MCF 10A (cell line): ENCODE measurements at regions of chr1 and their contacts with region 1.

Region 1: DNA sequence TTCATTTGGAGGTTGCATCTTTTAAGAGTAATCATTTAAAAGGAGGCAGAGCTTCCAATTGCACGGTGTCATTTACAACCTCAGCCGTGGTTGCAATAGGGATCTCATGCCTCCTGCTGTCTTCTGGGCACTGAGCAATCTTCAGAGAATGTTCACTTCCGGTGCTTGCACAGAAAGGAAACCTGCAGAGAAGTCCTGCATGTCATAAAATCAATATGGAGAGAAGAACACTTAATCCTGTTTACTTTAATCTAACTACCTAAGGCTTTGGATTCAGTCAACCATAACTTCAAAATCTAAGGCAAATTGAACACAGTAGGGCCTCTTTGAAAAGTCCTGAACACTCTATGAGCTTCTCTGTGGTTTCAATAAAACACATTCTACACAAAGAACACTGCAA is 11.3 kb upstream of the MAP10 start:
- DNase-seq: peak; percentile 86
- H3K4me3 Mint-ChIP-seq: no peak overlapping the region
- H3K27ac Mint-ChIP-seq: no peak overlapping the region
- H3K4me1 Mint-ChIP-seq: peaks cover 16% of the 10 kb centered on the region
- H3K27me3 Mint-ChIP-seq: no peaks in the 10 kb centered on the region
- CTCF ChIP-seq: peak; percentile 48

Region 2: GRCh38 chr1:232648316-232648715 is 145.6 kb before region 1 on chr1:
- CTCF ChIA-PET with region 1: interaction called, 14 read pairs
- POLR2A ChIA-PET with region 1: interaction called, 5 read pairs
- intact Hi-C with region 1: no loop called
- DNase-seq: no peak
- H3K4me3 Mint-ChIP-seq: no peak overlapping the region
- H3K27ac Mint-ChIP-seq: peak overlapping the region; percentile 13
- H3K4me1 Mint-ChIP-seq: peaks cover 14% of the 10 kb centered on the region
- H3K27me3 Mint-ChIP-seq: no peaks in the 10 kb centered on the region
- CTCF ChIP-seq: no peak

Region 3: DNA sequence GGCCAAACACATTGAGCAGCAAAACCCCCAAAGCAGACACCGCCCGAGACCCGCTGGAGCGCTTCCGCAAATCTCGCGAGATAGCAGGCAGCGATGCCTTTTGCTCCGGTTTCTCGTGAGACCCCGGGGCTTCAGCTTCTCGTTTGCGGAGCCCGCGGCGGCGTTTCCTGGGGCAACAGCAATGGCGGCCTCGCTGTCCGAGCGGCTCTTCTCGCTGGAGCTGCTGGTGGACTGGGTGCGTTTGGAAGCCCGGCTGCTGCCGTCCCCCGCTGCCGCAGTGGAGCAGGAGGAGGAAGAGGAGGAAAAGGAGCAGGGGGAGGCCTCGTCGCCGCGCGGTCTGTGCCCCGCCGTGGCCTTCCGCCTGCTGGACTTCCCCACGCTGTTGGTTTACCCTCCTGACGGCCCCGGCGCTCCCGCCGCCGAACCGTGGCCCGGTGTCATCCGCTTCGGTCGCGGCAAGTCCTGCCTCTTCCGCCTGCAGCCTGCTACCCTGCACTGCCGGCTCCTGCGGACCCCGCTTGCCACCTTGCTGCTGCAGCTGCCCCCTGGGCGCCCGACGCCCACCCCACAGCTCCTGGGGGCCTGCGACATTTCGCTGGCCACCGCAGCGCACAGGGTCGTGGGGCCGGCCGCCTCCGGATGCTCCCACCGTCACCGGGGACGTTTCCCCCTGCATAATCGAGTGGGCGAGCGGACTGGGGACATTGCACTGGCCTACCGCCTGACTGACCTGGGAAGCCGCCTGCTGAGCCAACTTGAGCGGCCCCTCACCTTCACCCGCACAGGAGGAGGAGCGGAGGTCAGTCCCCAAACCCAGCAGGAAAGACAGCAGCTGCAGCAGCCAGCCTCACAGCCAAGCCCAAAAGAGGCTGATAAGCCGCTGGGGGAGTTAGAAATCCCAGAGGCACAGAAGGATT is 11.6 kb after region 1 on chr1 and contains the start of gene MAP10:
- CTCF ChIA-PET with region 1: interaction called, 12 read pairs
- POLR2A ChIA-PET with region 1: interaction called, 3 read pairs
- intact Hi-C with region 1: no loop called
- DNase-seq: no peak
- H3K4me3 Mint-ChIP-seq: peak within 1 kb of the TSS; percentile 53
- H3K27ac Mint-ChIP-seq: no peak within 1 kb of the TSS
- H3K4me1 Mint-ChIP-seq: no peaks in the 10 kb centered on the region
- H3K27me3 Mint-ChIP-seq: peaks cover 16% of the 10 kb centered on the region
- CTCF ChIP-seq: no peak
- total RNA-seq, gene MAP10: not detected in 2 replicates

Region 4: GRCh38 chr1:233386336-233386735 is 592.4 kb after region 1 on chr1:
- CTCF ChIA-PET with region 1: no interaction called
- POLR2A ChIA-PET with region 1: no interaction called
- intact Hi-C with region 1: no loop called
- DNase-seq: peak; percentile 91
- H3K4me3 Mint-ChIP-seq: no peak overlapping the region
- H3K27ac Mint-ChIP-seq: no peak overlapping the region
- H3K4me1 Mint-ChIP-seq: peaks cover 6% of the 10 kb centered on the region
- H3K27me3 Mint-ChIP-seq: no peaks in the 10 kb centered on the region
- CTCF ChIP-seq: no peak